Right ventricle myocardium inferior (tissue), 1 donor: ENCODE measurements at regions of chr11 and their contacts with region 1.

Region 1: DNA sequence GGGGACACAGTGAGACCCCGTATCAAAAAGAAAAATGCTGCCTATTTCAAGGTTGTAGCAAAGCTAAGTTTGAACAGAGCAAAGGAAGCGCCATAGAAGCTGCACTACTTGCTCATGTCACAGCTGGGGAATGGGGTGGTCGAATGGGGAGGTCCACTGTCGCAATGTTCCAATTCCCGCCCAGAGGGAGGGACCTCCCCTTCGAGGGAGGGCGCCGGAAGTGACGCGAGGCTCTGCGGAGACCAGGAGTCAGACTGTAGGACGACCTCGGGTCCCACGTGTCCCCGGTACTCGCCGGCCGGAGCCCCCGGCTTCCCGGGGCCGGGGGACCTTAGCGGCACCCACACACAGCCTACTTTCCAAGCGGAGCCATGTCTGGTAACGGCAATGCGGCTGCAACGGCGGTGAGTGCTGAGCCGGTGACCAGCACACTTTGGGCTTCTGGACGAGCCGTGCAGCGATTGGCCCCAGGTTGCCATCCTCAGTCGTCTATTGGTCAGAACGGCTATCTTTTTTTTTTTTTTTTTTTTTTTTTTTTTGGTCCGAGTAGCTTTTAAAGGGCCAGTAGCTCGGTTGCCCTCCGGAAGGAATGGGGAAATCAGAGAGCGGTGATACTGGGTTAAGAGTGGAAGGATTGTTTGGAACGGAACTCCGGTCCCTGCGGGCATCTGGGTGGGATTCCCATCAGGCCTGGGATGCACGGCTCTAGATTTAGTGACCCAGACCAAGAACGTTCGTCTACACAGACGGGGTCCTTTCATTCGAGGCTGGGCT is at the start of gene HMBS:
- DNase-seq: peak; percentile 97
- ATAC-seq: peak; percentile 97
- total RNA-seq, gene HMBS: 22.8 TPM

Region 2: DNA sequence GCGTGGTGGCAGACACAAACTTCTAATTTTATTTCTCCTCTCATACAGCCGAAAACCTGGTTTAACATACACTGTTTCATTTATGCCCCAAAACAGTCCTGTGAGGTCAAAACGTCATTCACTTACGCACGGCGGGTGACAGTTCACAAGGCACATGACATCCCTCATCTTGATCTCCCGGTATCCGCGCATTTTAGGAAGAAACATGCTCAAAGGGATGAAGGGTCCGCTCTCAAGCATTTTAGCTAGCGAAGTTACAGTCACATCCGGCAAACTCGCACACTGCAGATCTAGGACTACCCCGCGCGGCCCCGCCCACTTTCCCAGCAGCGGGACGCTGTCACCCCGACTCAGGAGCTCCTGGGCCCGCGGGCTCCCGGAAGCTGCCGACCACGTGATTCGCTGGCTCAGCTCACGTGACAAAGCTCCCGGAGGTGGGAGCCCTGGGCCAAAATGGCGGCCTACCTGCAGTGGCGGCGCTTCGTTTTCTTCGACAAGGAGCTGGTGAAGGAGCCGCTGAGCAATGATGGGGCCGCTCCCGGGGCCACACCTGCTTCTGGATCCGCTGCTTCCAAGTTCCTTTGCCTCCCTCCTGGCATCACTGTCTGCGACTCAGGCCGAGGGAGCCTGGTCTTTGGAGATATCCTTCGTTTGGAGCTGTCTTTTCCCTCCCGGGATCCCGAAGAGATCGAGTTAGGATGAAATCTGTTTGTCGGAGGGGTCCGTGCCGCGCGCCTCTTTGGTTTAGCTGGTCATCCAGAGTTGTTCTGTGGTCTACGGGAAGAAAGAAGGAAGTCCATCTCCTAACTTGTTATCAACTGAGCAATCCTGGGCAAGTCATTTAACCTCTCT is 17.3 kb before region 1 on chr11 and contains the start of gene VPS11:
- intact Hi-C with region 1: loop called (anchors 2 kb)
- DNase-seq: peak; percentile 99
- ATAC-seq: peak; percentile 99
- total RNA-seq, gene VPS11: 19.3 TPM

Region 3: DNA sequence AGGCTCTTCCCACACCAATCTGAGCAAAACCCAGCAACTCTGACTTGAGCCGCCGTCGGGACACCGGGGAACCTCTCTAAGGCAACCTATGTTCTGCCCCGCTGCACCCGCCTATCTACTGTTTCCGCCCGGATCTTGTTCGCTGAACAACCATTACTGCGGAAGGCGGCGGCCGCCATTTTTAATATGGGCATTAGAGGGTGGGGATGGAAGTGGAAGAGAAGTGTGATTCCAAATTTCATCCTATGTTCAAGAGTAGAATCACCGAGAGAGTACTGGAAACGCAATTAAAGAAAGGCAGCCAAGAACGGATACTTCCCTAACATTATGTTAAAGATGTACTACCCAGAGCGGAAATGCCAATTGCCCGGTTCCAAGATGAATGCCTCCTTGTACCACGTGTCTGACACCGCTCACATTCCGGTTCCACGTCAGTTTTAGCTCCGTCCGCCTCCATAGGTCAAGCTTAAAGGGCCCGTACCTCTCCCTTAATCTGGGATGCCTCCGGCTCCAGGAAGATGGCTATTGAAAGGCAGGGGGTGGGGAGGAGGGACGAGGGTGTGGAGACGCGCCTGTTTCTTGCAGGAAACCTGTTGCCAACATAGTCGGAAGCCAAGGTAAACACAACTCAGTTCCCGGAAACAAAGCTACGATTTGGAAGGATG is 17.0 kb after region 1 on chr11 and contains the start of gene DPAGT1:
- intact Hi-C with region 1: no loop called
- DNase-seq: peak; percentile 94
- ATAC-seq: peak; percentile 97
- total RNA-seq, gene DPAGT1: 21.1 TPM

Region 4: GRCh38 chr11:119236490-119236889 is 151.6 kb after region 1 on chr11:
- intact Hi-C with region 1: no loop called
- DNase-seq: no peak
- ATAC-seq: no peak

Region 5: GRCh38 chr11:119728651-119729580 is 644.1 kb after region 1 on chr11 and contains the start of gene NECTIN1:
- intact Hi-C with region 1: no loop called
- DNase-seq: peak; percentile 95
- ATAC-seq: peak; percentile 94
- total RNA-seq, gene NECTIN1: 20.0 TPM